T-cell (primary cell): ENCODE measurements at regions of chr5 and their contacts with region 1.

Region 1: DNA sequence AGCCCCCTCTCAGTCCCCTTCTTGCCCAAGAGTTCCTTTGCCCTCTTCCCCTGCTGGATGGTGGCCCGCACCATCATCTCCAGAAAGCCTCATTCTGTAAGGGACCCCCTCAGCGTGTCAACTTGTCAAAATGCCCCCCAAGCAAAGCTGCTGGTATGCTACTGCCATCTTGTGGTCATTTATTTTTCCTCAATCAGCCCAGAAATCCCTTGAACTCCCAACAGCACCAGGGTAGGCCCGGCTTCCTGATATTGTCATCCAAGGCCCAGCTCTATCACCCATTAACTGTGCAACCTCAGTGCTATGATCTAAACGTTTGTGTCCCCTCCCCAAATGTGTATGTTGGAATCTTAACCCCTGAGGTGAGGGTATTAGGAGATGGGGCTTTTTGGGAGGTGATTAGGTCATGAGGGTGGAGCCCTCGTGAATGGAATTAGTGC is 53.2 kb upstream of the FBXW11 start:
- DNase-seq: peak in 2 of 35 experiments; percentile 5 to 48
- ATAC-seq: peak in 2 of 4 experiments; percentile 18 to 40
- H3K4me3 ChIP-seq: no peak overlapping the region
- H3K4me3 Mint-ChIP-seq: no peak overlapping the region
- H3K27ac ChIP-seq: no peak overlapping the region
- H3K27ac Mint-ChIP-seq: peak overlapping the region; percentile 87 to 94
- H3K4me1 ChIP-seq: peaks cover 0 to 10% of the 10 kb centered on the region in 2 experiments
- H3K4me1 Mint-ChIP-seq: peaks cover 40 to 53% (median 49%) of the 10 kb centered on the region in 3 donors
- H3K27me3 ChIP-seq: no peaks in the 10 kb centered on the region
- H3K27me3 Mint-ChIP-seq: no peaks in the 10 kb centered on the region

Region 2: DNA sequence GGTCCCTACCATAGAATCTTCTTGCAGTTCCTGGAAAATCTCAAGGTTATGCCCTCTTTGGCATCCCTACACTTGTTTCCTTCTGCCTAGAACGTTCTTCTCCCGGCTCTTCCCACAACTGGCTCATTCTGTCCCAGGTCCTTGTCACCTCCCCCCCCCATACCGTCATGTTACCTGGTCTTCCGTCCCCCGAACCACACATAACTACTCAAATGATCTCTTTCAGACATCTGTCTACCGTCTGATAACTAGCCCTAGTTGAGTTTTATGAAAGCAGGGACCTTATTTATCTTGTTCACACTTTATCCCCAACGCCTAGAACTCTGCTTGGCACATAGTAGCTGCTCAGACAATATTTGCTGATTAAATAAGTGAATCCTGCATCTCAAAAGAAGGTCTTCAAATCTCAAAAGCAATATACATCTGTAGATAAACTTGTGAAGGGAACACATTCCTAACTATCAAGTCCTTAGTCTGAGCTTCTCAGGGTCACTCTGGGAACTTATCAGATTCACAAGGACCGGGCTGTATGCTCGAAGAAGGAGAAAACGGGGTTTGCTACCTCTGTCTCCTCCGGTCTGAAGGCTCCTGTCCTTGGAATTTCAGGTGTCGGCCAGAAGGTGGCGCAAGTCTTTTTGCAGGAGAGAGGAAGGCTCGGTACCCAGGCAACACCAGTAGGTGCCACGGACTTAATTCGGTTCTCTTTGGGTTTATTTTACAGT is 1792.1 kb before region 1 on chr5:
- CTCF ChIA-PET with region 1: interaction called in 1 of 2 experiments, 16 read pairs
- POLR2A ChIA-PET with region 1: no interaction called
- DNase-seq: peak; percentile 52 to 93 (median 78)
- ATAC-seq: peak; percentile 59 to 76 (median 65)
- H3K4me3 ChIP-seq: no peak overlapping the region
- H3K4me3 Mint-ChIP-seq: peak overlapping the region; percentile 58 to 77 (median 62)
- H3K27ac ChIP-seq: peak overlapping the region; percentile 80
- H3K27ac Mint-ChIP-seq: peak overlapping the region; percentile 91 to 95
- H3K4me1 ChIP-seq: peaks cover 68 to 82% of the 10 kb centered on the region in 2 experiments
- H3K4me1 Mint-ChIP-seq: peaks cover 88 to 96% (median 95%) of the 10 kb centered on the region in 3 donors
- H3K27me3 ChIP-seq: no peaks in the 10 kb centered on the region
- H3K27me3 Mint-ChIP-seq: no peaks in the 10 kb centered on the region

Region 3: GRCh38 chr5:171913987-171914273 is 145.8 kb before region 1 on chr5:
- CTCF ChIA-PET with region 1: interaction called, 9 to 20 read pairs
- POLR2A ChIA-PET with region 1: no interaction called
- DNase-seq: no peak
- ATAC-seq: no peak
- H3K4me3 ChIP-seq: no peak overlapping the region
- H3K4me3 Mint-ChIP-seq: no peak overlapping the region
- H3K27ac ChIP-seq: no peak overlapping the region
- H3K27ac Mint-ChIP-seq: peak overlapping the region; percentile 81 to 83
- H3K4me1 ChIP-seq: peaks cover 4 to 7% of the 10 kb centered on the region in 2 experiments
- H3K4me1 Mint-ChIP-seq: peaks cover 45 to 52% (median 49%) of the 10 kb centered on the region in 3 donors
- H3K27me3 ChIP-seq: no peaks in the 10 kb centered on the region
- H3K27me3 Mint-ChIP-seq: no peaks in the 10 kb centered on the region

Region 4: GRCh38 chr5:172144291-172144815 is 84.7 kb after region 1 on chr5:
- CTCF ChIA-PET with region 1: interaction called in 1 of 2 experiments, 3 read pairs
- POLR2A ChIA-PET with region 1: interaction called in 1 of 2 experiments, 11 read pairs
- DNase-seq: no peak
- ATAC-seq: no peak
- H3K4me3 ChIP-seq: no peak overlapping the region
- H3K4me3 Mint-ChIP-seq: peak overlapping the region in 2 of 3 donors; percentile 6 to 19
- H3K27ac ChIP-seq: peak overlapping the region; percentile 9
- H3K27ac Mint-ChIP-seq: peak overlapping the region; percentile 85
- H3K4me1 ChIP-seq: peaks cover 11 to 86% of the 10 kb centered on the region in 2 experiments
- H3K4me1 Mint-ChIP-seq: peaks cover 76 to 96% (median 92%) of the 10 kb centered on the region in 3 donors
- H3K27me3 ChIP-seq: no peaks in the 10 kb centered on the region
- H3K27me3 Mint-ChIP-seq: no peaks in the 10 kb centered on the region

Region 5: DNA sequence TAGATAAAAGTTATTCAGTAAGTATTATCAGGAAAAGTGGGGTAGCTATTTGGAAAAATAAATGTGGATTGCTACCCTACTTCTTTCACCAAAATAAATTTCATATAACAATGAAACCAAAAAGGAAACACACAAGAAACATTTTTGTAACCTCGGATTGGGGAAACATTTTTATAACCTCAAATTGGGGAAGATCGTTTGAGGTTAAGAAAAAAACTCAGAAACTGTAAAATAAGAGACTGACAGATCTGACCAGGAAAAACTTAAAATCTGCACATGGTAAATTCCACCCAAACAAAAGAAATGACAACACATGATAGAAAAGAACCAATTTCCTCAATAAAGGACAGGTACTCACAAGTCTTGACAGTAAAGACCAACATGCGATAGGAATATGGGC is 147.8 kb after region 1 on chr5:
- CTCF ChIA-PET with region 1: no interaction called
- POLR2A ChIA-PET with region 1: interaction called in 1 of 2 experiments, 11 read pairs
- DNase-seq: no peak
- ATAC-seq: no peak
- H3K4me3 ChIP-seq: no peak overlapping the region
- H3K4me3 Mint-ChIP-seq: no peak overlapping the region
- H3K27ac ChIP-seq: no peak overlapping the region
- H3K27ac Mint-ChIP-seq: no peak overlapping the region
- H3K4me1 ChIP-seq: no peaks in the 10 kb centered on the region
- H3K4me1 Mint-ChIP-seq: peaks cover 5 to 13% (median 7%) of the 10 kb centered on the region in 3 donors
- H3K27me3 ChIP-seq: no peaks in the 10 kb centered on the region
- H3K27me3 Mint-ChIP-seq: no peaks in the 10 kb centered on the region